CD4-positive, alpha-beta T cell (primary cell): ENCODE measurements at regions of chr9 and their contacts with region 1.

Region 1: GRCh38 chr9:89956907-89957306 is 352.1 kb downstream of the GADD45G start:
- DNase-seq: no peak
- ATAC-seq: no peak
- H3K4me3 ChIP-seq: no peak overlapping the region
- H3K4me3 Mint-ChIP-seq: no peak overlapping the region
- H3K27ac ChIP-seq: no peak overlapping the region
- H3K27ac Mint-ChIP-seq: no peak overlapping the region
- H3K4me1 ChIP-seq: peaks cover 6% of the 10 kb centered on the region
- H3K4me1 Mint-ChIP-seq: peaks cover 11% of the 10 kb centered on the region
- H3K27me3 ChIP-seq: no peaks in the 10 kb centered on the region
- H3K27me3 Mint-ChIP-seq: no peaks in the 10 kb centered on the region
- CTCF ChIP-seq: no peak

Region 2: GRCh38 chr9:89448381-89448780 is 508.5 kb before region 1 on chr9:
- CTCF ChIA-PET with region 1: no interaction called
- POLR2A ChIA-PET with region 1: no interaction called
- intact Hi-C with region 1: no loop called
- DNase-seq: peak in 6 of 14 experiments; percentile 31 to 60 (median 50)
- ATAC-seq: peak; percentile 35
- H3K4me3 ChIP-seq: no peak overlapping the region
- H3K4me3 Mint-ChIP-seq: peak overlapping the region; percentile 67
- H3K27ac ChIP-seq: peak overlapping the region; percentile 40 to 68
- H3K27ac Mint-ChIP-seq: peak overlapping the region; percentile 96
- H3K4me1 ChIP-seq: peaks cover 88% of the 10 kb centered on the region
- H3K4me1 Mint-ChIP-seq: peaks cover 88% of the 10 kb centered on the region
- H3K27me3 ChIP-seq: no peaks in the 10 kb centered on the region
- H3K27me3 Mint-ChIP-seq: no peaks in the 10 kb centered on the region
- CTCF ChIP-seq: no peak

Region 3: DNA sequence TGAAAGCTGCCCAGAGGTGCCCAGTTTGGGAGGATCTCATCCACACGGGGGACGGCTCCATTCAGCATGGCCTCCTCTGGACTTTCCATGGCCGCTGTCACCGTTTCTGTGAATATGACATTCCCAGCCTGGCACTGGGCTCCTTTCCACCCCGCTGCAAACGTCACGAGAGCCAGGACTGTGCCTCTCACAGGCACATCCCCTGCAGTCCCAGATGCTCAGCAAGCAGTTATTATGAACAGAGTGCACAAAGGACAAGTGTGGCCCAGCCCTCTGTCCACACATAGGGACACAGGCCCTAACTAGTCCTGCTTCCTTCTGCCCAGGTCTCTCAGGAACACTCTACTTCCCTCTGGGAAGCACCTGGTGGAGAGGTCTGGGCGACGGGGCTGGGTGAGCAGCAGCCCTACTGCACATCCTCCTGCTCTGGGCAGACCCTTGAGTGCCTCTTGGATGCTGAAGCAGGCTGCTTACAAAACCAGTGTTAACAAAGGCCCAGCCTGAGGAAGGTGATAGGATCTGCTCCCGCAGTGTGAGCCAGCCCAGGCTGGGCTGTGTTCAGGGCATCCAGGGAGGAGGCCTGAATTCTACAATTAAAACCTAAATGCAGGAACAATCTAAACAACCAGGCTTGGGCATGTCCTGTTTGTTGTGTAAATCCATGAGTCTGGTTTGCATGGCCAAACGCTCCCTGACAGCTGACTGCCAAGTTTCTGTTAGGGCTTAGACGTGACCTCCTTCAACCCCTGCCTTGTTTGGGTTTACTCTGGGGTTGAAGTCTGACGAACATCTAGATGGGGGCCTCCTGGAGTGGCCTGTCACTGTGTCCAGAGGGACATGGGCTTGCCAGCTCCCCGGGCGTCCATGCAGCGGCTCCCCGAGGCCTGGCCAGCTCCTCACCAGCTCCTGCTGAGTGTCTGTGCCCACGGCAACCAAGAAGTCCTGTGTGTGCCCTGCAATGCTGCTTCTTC is 82.3 kb before region 1 on chr9:
- CTCF ChIA-PET with region 1: no interaction called
- POLR2A ChIA-PET with region 1: no interaction called
- intact Hi-C with region 1: no loop called
- DNase-seq: peak in 1 of 14 experiments; percentile 24
- ATAC-seq: no peak
- H3K4me3 ChIP-seq: no peak overlapping the region
- H3K4me3 Mint-ChIP-seq: no peak overlapping the region
- H3K27ac ChIP-seq: no peak overlapping the region
- H3K27ac Mint-ChIP-seq: no peak overlapping the region
- H3K4me1 ChIP-seq: no peaks in the 10 kb centered on the region
- H3K4me1 Mint-ChIP-seq: no peaks in the 10 kb centered on the region
- H3K27me3 ChIP-seq: no peaks in the 10 kb centered on the region
- H3K27me3 Mint-ChIP-seq: no peaks in the 10 kb centered on the region
- CTCF ChIP-seq: no peak

Region 4: DNA sequence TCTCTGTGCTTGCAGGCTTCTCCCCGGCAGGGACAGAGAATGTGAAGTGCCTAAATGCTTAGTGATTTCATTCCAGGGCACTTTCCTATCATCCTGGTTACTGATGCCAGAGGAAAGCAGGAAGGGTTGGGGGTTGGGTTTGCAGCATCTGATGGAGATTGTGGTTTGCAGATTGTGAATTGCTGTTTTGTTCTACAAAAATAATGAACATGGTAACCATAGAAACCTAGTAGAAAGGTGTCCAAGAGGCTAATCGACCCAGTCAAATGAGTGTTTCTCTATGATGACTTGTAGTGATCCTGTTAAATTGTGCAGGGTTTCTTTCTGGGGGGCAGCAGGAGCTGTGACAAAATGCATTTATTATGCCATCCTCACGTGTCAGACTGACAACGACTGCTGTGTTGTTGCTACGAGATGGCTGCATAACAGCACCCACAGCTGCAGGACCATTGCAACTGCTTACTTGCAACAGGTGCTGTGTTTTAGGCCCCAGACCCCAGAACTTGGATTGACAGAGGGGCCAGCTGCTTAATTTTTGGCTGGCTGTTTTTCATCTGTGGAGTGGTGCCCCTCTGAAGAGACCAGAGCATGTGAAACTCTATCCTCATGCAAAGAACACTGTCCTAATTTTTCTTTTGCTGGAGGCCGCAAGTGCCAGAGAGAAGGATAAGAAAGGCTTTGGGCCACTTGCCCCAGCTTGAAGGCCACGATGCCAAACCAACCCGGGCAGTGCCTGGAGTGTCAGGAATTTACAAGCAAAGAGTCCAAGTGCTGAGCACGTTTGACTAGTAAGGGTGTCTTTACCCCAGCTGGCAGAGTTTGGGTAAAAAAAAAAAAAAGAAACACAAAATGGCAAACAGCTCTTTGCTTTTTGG is 45.7 kb after region 1 on chr9:
- CTCF ChIA-PET with region 1: no interaction called
- POLR2A ChIA-PET with region 1: no interaction called
- intact Hi-C with region 1: loop called in 1 of 2 experiments (anchors 1 kb)
- DNase-seq: no peak
- ATAC-seq: no peak
- H3K4me3 ChIP-seq: no peak overlapping the region
- H3K4me3 Mint-ChIP-seq: no peak overlapping the region
- H3K27ac ChIP-seq: no peak overlapping the region
- H3K27ac Mint-ChIP-seq: no peak overlapping the region
- H3K4me1 ChIP-seq: peaks cover 19% of the 10 kb centered on the region
- H3K4me1 Mint-ChIP-seq: peaks cover 26% of the 10 kb centered on the region
- H3K27me3 ChIP-seq: no peaks in the 10 kb centered on the region
- H3K27me3 Mint-ChIP-seq: no peaks in the 10 kb centered on the region
- CTCF ChIP-seq: no peak